ENCODE measurements at regions of chr7 and their contacts with region 1.

Region 1: DNA sequence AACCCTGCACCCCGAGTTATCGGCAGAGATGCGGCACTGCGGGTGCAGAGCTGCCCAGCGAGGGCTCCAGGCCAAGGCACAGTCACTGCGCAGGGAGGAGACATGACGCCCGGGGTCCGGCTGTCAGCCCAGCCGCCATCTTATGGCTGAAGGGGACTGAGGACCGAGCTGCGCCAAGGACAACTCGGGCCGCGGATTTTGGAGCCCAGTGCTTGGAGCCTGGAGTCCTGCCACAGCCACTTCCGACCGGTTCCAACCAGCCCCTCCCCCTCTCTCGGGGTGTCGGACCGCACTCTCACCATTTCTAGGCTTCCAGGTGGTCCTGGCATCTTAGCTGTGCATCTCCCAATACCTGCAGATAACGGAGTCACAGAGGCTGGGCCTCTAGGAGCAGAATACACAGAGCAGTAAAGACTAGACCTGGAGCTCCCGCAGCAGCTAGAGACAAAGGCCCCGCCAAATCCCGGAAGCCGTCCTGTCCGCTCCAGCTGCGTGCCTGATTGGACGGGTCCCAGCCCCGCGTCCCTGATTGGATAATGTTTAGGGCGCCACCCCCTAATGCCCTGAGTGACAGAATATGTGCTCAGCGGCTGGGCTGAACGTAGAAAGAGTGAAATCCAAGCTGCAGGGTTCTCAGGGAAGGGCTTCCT is at the start of gene ZNF680:
- DNase-seq: peak; percentile 88
- ATAC-seq: peak; percentile 99
- H3K4me3 ChIP-seq: peak within 1 kb of the TSS; percentile 68 to 99 (median 91)
- H3K4me3 Mint-ChIP-seq: peak within 1 kb of the TSS; percentile 100
- H3K27ac ChIP-seq: peak within 1 kb of the TSS; percentile 54 to 74
- H3K27ac Mint-ChIP-seq: peak within 1 kb of the TSS; percentile 96
- H3K4me1 ChIP-seq: peaks cover 0 to 13% of the 10 kb centered on the region in 2 donors
- H3K4me1 Mint-ChIP-seq: peaks cover 30% of the 10 kb centered on the region
- H3K27me3 ChIP-seq: no peaks in the 10 kb centered on the region
- H3K27me3 Mint-ChIP-seq: no peaks in the 10 kb centered on the region
- CTCF ChIP-seq: no peak
- total RNA-seq, gene ZNF680: 27.3 and 27.8 TPM in 2 replicates

Region 2: GRCh38 chr7:63900394-63901203 is 662.2 kb before region 1 on chr7:
- CTCF ChIA-PET with region 1: no interaction called
- POLR2A ChIA-PET with region 1: no interaction called
- intact Hi-C with region 1: loop called (anchors 1 kb)
- DNase-seq: peak; percentile 94
- ATAC-seq: peak; percentile 87
- H3K4me3 ChIP-seq: peak overlapping the region in 4 of 5 experiments; percentile 70 to 84 (median 78)
- H3K4me3 Mint-ChIP-seq: peak overlapping the region; percentile 93
- H3K27ac ChIP-seq: peak overlapping the region; percentile 72 to 86
- H3K27ac Mint-ChIP-seq: peak overlapping the region; percentile 93
- H3K4me1 ChIP-seq: peaks cover 0 to 16% of the 10 kb centered on the region in 2 donors
- H3K4me1 Mint-ChIP-seq: peaks cover 5% of the 10 kb centered on the region
- H3K27me3 ChIP-seq: no peaks in the 10 kb centered on the region
- H3K27me3 Mint-ChIP-seq: no peaks in the 10 kb centered on the region
- CTCF ChIP-seq: no peak

Region 3: GRCh38 chr7:63925623-63926460 is 636.9 kb before region 1 on chr7:
- CTCF ChIA-PET with region 1: no interaction called
- POLR2A ChIA-PET with region 1: no interaction called
- intact Hi-C with region 1: loop called (anchors 2 kb)
- DNase-seq: peak; percentile 96
- ATAC-seq: peak; percentile 89
- H3K4me3 ChIP-seq: peak overlapping the region; percentile 55 to 87 (median 71)
- H3K4me3 Mint-ChIP-seq: peak overlapping the region; percentile 93
- H3K27ac ChIP-seq: peak overlapping the region; percentile 84 to 85
- H3K27ac Mint-ChIP-seq: peak overlapping the region; percentile 96
- H3K4me1 ChIP-seq: peaks cover 0 to 11% of the 10 kb centered on the region in 2 donors
- H3K4me1 Mint-ChIP-seq: peaks cover 3% of the 10 kb centered on the region
- H3K27me3 ChIP-seq: no peaks in the 10 kb centered on the region
- H3K27me3 Mint-ChIP-seq: no peaks in the 10 kb centered on the region
- CTCF ChIP-seq: no peak

Region 4: DNA sequence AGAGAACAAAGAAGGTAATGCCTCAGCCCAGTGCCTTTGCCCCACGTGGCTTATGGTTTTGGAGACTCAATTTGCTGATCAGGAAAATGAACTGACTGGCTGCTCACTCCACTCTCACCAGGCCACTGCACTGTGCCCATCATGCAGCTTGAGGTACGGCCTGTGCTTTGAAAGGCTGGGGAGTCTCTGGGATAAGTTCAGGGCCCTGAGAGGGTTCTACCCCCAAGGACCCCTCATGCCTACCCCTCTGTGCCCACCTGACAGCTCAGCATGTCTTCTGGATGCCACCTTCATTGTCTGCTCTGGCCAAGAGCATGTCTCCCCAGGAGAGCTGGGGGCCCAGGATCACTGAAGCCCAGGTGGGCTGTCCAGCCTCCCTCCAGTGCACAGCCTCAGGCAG is 609.6 kb before region 1 on chr7:
- CTCF ChIA-PET with region 1: no interaction called
- POLR2A ChIA-PET with region 1: no interaction called
- intact Hi-C with region 1: no loop called
- DNase-seq: no peak
- ATAC-seq: no peak
- H3K4me3 ChIP-seq: no peak overlapping the region
- H3K4me3 Mint-ChIP-seq: no peak overlapping the region
- H3K27ac ChIP-seq: no peak overlapping the region
- H3K27ac Mint-ChIP-seq: no peak overlapping the region
- H3K4me1 ChIP-seq: no peaks in the 10 kb centered on the region
- H3K4me1 Mint-ChIP-seq: no peaks in the 10 kb centered on the region
- H3K27me3 ChIP-seq: no peaks in the 10 kb centered on the region
- H3K27me3 Mint-ChIP-seq: no peaks in the 10 kb centered on the region
- CTCF ChIP-seq: no peak

Region 5: GRCh38 chr7:64307254-64308015 is 255.3 kb before region 1 on chr7:
- CTCF ChIA-PET with region 1: interaction called, 5 read pairs
- POLR2A ChIA-PET with region 1: interaction called, 14 read pairs
- intact Hi-C with region 1: loop called (anchors 2 kb)
- DNase-seq: peak; percentile 96
- ATAC-seq: peak; percentile 94
- H3K4me3 ChIP-seq: peak overlapping the region; percentile 55 to 87 (median 75)
- H3K4me3 Mint-ChIP-seq: peak overlapping the region; percentile 90
- H3K27ac ChIP-seq: peak overlapping the region; percentile 82 to 92
- H3K27ac Mint-ChIP-seq: peak overlapping the region; percentile 88
- H3K4me1 ChIP-seq: peaks cover 24 to 30% of the 10 kb centered on the region in 2 donors
- H3K4me1 Mint-ChIP-seq: peaks cover 37% of the 10 kb centered on the region
- H3K27me3 ChIP-seq: no peaks in the 10 kb centered on the region
- H3K27me3 Mint-ChIP-seq: no peaks in the 10 kb centered on the region
- CTCF ChIP-seq: no peak

Region 6: GRCh38 chr7:64313740-64314491 is 248.8 kb before region 1 on chr7 and contains the start of gene ZNF736:
- CTCF ChIA-PET with region 1: no interaction called
- POLR2A ChIA-PET with region 1: interaction called, 3 read pairs
- intact Hi-C with region 1: loop called (anchors 2 kb)
- DNase-seq: peak; percentile 92
- ATAC-seq: peak; percentile 100
- H3K4me3 ChIP-seq: peak within 1 kb of the TSS; percentile 76 to 99 (median 92)
- H3K4me3 Mint-ChIP-seq: peak within 1 kb of the TSS; percentile 99
- H3K27ac ChIP-seq: peak within 1 kb of the TSS; percentile 88 to 97
- H3K27ac Mint-ChIP-seq: peak within 1 kb of the TSS; percentile 99
- H3K4me1 ChIP-seq: peaks cover 20 to 31% of the 10 kb centered on the region in 2 donors
- H3K4me1 Mint-ChIP-seq: peaks cover 38% of the 10 kb centered on the region
- H3K27me3 ChIP-seq: no peaks in the 10 kb centered on the region
- H3K27me3 Mint-ChIP-seq: no peaks in the 10 kb centered on the region
- CTCF ChIP-seq: no peak
- total RNA-seq, gene ZNF736: 79.8 and 85.0 TPM in 2 replicates

Region 7: DNA sequence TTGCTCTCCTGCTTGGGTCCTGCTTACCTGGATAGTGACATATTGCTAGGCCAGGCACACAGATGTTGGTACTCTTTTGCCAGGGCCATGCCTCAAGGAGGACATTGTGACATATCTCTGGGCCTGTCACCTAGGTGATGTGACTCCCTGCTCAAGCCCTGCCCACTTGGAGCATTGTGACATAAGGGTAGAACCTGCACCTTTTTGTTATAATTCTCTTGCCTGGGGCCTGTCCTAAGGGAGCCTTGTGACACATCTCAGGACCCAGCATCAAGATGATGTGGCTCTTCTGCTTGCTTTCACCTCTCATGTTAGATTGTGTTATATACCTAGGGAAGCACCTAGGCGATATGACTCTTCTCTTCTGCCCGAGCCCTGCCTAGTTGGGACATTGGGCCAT is 191.6 kb before region 1 on chr7:
- CTCF ChIA-PET with region 1: no interaction called
- POLR2A ChIA-PET with region 1: no interaction called
- intact Hi-C with region 1: no loop called
- DNase-seq: no peak
- ATAC-seq: no peak
- H3K4me3 ChIP-seq: no peak overlapping the region
- H3K4me3 Mint-ChIP-seq: no peak overlapping the region
- H3K27ac ChIP-seq: no peak overlapping the region
- H3K27ac Mint-ChIP-seq: no peak overlapping the region
- H3K4me1 ChIP-seq: no peaks in the 10 kb centered on the region
- H3K4me1 Mint-ChIP-seq: no peaks in the 10 kb centered on the region
- H3K27me3 ChIP-seq: no peaks in the 10 kb centered on the region
- H3K27me3 Mint-ChIP-seq: no peaks in the 10 kb centered on the region
- CTCF ChIP-seq: no peak

Region 8: DNA sequence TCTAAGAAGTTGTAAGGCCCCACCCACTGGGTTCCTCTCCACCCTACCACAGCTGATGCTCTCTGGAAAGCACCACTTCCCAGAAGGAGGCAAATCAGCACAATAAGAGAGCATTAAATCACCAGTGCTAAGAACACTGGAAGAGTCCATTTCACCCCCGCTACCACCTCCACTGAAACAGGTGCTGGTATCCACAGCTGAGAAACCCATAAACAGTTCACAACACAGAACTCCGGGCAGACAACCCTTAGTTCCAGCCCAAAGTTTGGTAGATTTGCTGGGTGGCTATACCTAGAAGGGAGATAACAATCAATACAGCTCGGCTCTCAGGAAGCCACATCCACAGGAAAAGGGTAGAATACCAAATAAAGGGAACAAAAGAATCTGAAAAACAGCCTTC is 34.0 kb before region 1 on chr7:
- CTCF ChIA-PET with region 1: no interaction called
- POLR2A ChIA-PET with region 1: no interaction called
- intact Hi-C with region 1: no loop called
- DNase-seq: no peak
- ATAC-seq: no peak
- H3K4me3 ChIP-seq: no peak overlapping the region
- H3K4me3 Mint-ChIP-seq: no peak overlapping the region
- H3K27ac ChIP-seq: no peak overlapping the region
- H3K27ac Mint-ChIP-seq: no peak overlapping the region
- H3K4me1 ChIP-seq: no peaks in the 10 kb centered on the region
- H3K4me1 Mint-ChIP-seq: no peaks in the 10 kb centered on the region
- H3K27me3 ChIP-seq: no peaks in the 10 kb centered on the region
- H3K27me3 Mint-ChIP-seq: no peaks in the 10 kb centered on the region
- CTCF ChIP-seq: no peak

Region 9: GRCh38 chr7:64794171-64794844 is 231.6 kb after region 1 on chr7 and contains the start of gene ZNF138:
- CTCF ChIA-PET with region 1: no interaction called
- POLR2A ChIA-PET with region 1: no interaction called
- intact Hi-C with region 1: loop called (anchors 1 kb)
- DNase-seq: peak; percentile 93
- ATAC-seq: peak; percentile 99
- H3K4me3 ChIP-seq: peak within 1 kb of the TSS; percentile 72 to 89 (median 76)
- H3K4me3 Mint-ChIP-seq: peak within 1 kb of the TSS; percentile 99
- H3K27ac ChIP-seq: peak within 1 kb of the TSS; percentile 76 to 84
- H3K27ac Mint-ChIP-seq: peak within 1 kb of the TSS; percentile 97
- H3K4me1 ChIP-seq: peaks cover 13 to 14% of the 10 kb centered on the region in 2 donors
- H3K4me1 Mint-ChIP-seq: peaks cover 24% of the 10 kb centered on the region
- H3K27me3 ChIP-seq: no peaks in the 10 kb centered on the region
- H3K27me3 Mint-ChIP-seq: no peaks in the 10 kb centered on the region
- CTCF ChIP-seq: no peak
- total RNA-seq, gene ZNF138: 23.0 and 26.6 TPM in 2 replicates

Region 10: GRCh38 chr7:65006094-65006992 is 443.6 kb after region 1 on chr7 and contains the start of gene ERV3-1:
- CTCF ChIA-PET with region 1: no interaction called
- POLR2A ChIA-PET with region 1: interaction called, 3 read pairs
- intact Hi-C with region 1: loop called (anchors 1 kb)
- DNase-seq: peak; percentile 95
- ATAC-seq: peak; percentile 99
- H3K4me3 ChIP-seq: peak within 1 kb of the TSS; percentile 60 to 89 (median 87)
- H3K4me3 Mint-ChIP-seq: peak within 1 kb of the TSS; percentile 95
- H3K27ac ChIP-seq: peak within 1 kb of the TSS; percentile 84 to 96
- H3K27ac Mint-ChIP-seq: peak within 1 kb of the TSS; percentile 91
- H3K4me1 ChIP-seq: peaks cover 20 to 33% of the 10 kb centered on the region in 2 donors
- H3K4me1 Mint-ChIP-seq: peaks cover 46% of the 10 kb centered on the region
- H3K27me3 ChIP-seq: no peaks in the 10 kb centered on the region
- H3K27me3 Mint-ChIP-seq: no peaks in the 10 kb centered on the region
- CTCF ChIP-seq: no peak
- total RNA-seq, gene ERV3-1: 29.1 and 30.7 TPM in 2 replicates

Measured in B cell (primary cell).